ENCODE measurements at regions of chr2 and their contacts with region 1.

Region 1: GRCh38 chr2:151238527-151239487 is 22.9 kb downstream of the RBM43 start:
- DNase-seq: peak; percentile 86
- ATAC-seq: peak; percentile 52
- H3K4me3 ChIP-seq: no peak overlapping the region
- H3K27ac ChIP-seq: peak overlapping the region; percentile 7
- H3K4me1 ChIP-seq: peaks cover 27% of the 10 kb centered on the region
- H3K27me3 ChIP-seq: no peaks in the 10 kb centered on the region
- CTCF ChIP-seq: peak; percentile 91

Region 2: DNA sequence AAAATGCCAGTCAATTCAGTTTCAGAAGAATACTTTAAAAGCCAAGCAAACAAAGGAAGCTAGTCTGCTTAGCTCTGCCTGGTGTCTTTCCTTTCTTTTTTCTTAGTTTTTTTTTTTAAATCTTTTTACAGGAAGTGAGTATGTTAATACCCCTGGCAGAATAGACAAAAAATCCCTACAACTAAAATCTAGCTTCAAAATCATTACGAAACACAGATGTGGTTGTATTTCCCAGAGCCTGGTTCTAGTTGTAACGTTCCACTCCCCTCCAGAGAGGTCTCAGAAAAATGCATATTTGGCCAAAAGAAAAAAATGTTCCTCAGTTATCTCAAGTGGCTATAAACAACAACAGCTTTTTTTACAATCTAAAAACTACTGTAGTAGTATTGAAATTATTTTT is 549.2 kb before region 1 on chr2:
- CTCF ChIA-PET with region 1: interaction called, 7 read pairs
- POLR2A ChIA-PET with region 1: no interaction called
- intact Hi-C with region 1: loop called (anchors 5 kb)
- DNase-seq: no peak
- ATAC-seq: no peak
- H3K4me3 ChIP-seq: no peak overlapping the region
- H3K27ac ChIP-seq: no peak overlapping the region
- H3K4me1 ChIP-seq: peaks cover 28% of the 10 kb centered on the region
- H3K27me3 ChIP-seq: no peaks in the 10 kb centered on the region
- CTCF ChIP-seq: no peak

Region 3: GRCh38 chr2:150944315-150944714 is 294.5 kb before region 1 on chr2:
- CTCF ChIA-PET with region 1: no interaction called
- POLR2A ChIA-PET with region 1: no interaction called
- intact Hi-C with region 1: loop called (anchors 5 kb)
- DNase-seq: no peak
- ATAC-seq: no peak
- H3K4me3 ChIP-seq: no peak overlapping the region
- H3K27ac ChIP-seq: no peak overlapping the region
- H3K4me1 ChIP-seq: no peaks in the 10 kb centered on the region
- H3K27me3 ChIP-seq: no peaks in the 10 kb centered on the region
- CTCF ChIP-seq: no peak